ENCODE measurements at regions of chr20 and their contacts with region 1.

Region 1: DNA sequence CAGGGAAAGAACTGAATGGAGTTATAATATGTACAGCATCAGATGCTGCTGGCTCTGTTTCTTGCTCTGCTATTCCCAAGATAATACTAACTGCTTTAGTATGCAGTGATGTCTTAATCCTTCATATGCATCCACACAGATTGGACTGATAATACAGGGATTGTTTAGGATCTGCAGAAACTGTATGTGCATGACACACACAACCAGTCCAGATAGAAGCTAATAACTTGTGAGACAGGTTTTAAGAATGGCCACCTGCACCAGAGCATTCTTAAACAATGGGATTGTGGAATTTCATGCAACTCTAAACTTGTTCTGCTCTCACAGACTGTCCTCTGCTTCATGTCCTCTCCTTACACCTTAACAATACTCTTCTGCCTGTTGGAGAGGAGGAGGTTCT is 90.9 kb downstream of the SPTLC3 start:
- DNase-seq: no peak
- ATAC-seq: no peak
- H3K4me3 ChIP-seq: no peak overlapping the region
- H3K27ac ChIP-seq: no peak overlapping the region
- H3K4me1 ChIP-seq: no peaks in the 10 kb centered on the region
- H3K27me3 ChIP-seq: no peaks in the 10 kb centered on the region
- CTCF ChIP-seq: no peak
- POLR2A ChIP-seq: no peak

Region 2: GRCh38 chr20:11676630-11677284 is 1422.9 kb before region 1 on chr20:
- in situ Hi-C with region 1: loop called in 2 of 4 experiments (anchors 10 to 25 kb)
- intact Hi-C with region 1: no loop called
- DNase-seq: no peak
- ATAC-seq: peak in 1 of 2 donors; percentile 78
- H3K4me3 ChIP-seq: no peak overlapping the region
- H3K27ac ChIP-seq: no peak overlapping the region
- H3K4me1 ChIP-seq: no peaks in the 10 kb centered on the region
- H3K27me3 ChIP-seq: no peaks in the 10 kb centered on the region
- CTCF ChIP-seq: peak; percentile 50 to 77 (median 67)
- POLR2A ChIP-seq: no peak

Region 3: GRCh38 chr20:12902992-12903391 is 196.7 kb before region 1 on chr20:
- in situ Hi-C with region 1: no loop called
- intact Hi-C with region 1: no loop called
- DNase-seq: no peak
- ATAC-seq: no peak
- H3K4me3 ChIP-seq: no peak overlapping the region
- H3K27ac ChIP-seq: no peak overlapping the region
- H3K4me1 ChIP-seq: no peaks in the 10 kb centered on the region
- H3K27me3 ChIP-seq: no peaks in the 10 kb centered on the region
- CTCF ChIP-seq: no peak
- POLR2A ChIP-seq: no peak

Region 4: GRCh38 chr20:13174402-13174801 is 74.7 kb after region 1 on chr20:
- in situ Hi-C with region 1: no loop called
- intact Hi-C with region 1: no loop called
- DNase-seq: no peak
- ATAC-seq: no peak
- H3K4me3 ChIP-seq: no peak overlapping the region
- H3K27ac ChIP-seq: no peak overlapping the region
- H3K4me1 ChIP-seq: no peaks in the 10 kb centered on the region
- H3K27me3 ChIP-seq: no peaks in the 10 kb centered on the region
- CTCF ChIP-seq: no peak
- POLR2A ChIP-seq: no peak

Measured in gastrocnemius medialis (tissue), 4 donors.